Mammary epithelial cell (primary cell): ENCODE measurements at regions of chr20 and their contacts with region 1.

Region 1: DNA sequence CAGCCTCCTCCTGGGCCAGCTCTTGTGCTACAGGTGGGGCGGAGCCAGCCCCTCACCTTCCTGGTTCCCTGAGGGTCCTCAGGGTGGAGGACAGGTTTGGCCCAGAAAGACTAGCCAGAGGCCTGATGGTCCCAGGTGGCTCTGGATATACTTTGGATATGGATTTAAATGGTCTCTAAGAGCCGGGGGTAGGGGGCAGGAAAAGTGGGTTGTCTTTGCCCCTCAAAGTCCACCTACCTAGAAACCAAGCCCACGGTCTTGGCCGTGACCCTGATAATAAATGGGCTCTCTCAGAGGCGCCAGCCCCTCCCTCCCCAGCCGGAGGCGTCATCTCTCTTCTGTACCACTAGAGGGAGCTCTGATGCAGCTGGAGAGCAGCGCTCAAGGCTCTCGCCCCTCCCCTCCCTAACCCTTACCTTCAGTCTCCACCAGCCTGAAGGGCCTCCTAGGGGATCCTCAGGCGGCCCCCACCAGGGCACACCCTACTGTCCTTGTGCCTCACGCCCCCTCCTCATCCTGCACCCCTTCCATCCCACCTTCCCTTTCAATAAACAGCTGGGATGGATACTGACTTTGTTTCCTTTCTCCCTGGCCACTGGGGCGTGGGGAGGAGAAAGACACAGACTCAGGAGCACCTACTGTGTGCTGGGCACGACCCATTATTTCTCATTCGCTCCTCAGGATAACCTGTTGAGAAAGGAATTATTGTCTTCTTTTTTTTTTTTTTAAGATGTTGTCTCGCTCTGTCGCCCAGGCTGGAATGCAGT is 7.6 kb downstream of the NRSN2 start:
- DNase-seq: peak; percentile 56
- H3K4me3 ChIP-seq: no peak overlapping the region
- H3K27ac ChIP-seq: no peak overlapping the region
- H3K4me1 ChIP-seq: no peaks in the 10 kb centered on the region
- H3K27me3 ChIP-seq: no peaks in the 10 kb centered on the region
- CTCF ChIP-seq: peak; percentile 91 to 95

Region 2: GRCh38 chr20:396619-397431 is 42.3 kb after region 1 on chr20:
- CTCF ChIA-PET with region 1: interaction called, 3 read pairs
- dilution Hi-C with region 1: no loop called
- in situ Hi-C with region 1: no loop called
- intact Hi-C with region 1: loop called (anchors 5 kb)
- DNase-seq: no peak
- H3K4me3 ChIP-seq: no peak overlapping the region
- H3K27ac ChIP-seq: no peak overlapping the region
- H3K4me1 ChIP-seq: peaks cover 18% of the 10 kb centered on the region
- H3K27me3 ChIP-seq: no peaks in the 10 kb centered on the region
- CTCF ChIP-seq: no peak

Region 3: DNA sequence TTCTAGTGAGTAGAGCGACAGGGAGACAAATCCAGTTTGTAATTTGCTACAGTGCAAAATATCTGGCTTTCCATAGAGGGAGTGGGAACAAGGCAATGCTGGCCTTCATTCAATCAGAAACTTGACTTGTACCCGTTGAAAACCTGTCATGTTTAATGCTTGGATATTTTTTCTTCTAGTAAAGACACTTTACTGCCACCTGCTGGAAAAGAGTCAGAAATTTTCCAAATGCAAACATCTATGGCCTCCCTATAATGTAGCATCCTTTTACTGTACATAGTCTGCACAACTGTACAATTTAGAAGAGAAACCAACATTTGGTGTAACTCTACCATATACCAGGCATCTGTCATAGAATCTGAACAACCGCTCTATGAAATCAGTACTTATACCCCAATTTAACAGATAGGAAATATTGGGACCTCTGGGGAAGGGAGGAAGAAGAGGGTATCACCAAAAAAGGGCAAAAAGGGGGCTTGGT is 124.5 kb after region 1 on chr20:
- CTCF ChIA-PET with region 1: no interaction called
- dilution Hi-C with region 1: no loop called
- in situ Hi-C with region 1: loop called (anchors 10 kb)
- intact Hi-C with region 1: loop called (anchors 1 kb)
- DNase-seq: peak; percentile 47
- H3K4me3 ChIP-seq: no peak overlapping the region
- H3K27ac ChIP-seq: no peak overlapping the region
- H3K4me1 ChIP-seq: no peaks in the 10 kb centered on the region
- H3K27me3 ChIP-seq: no peaks in the 10 kb centered on the region
- CTCF ChIP-seq: peak; percentile 36 to 60

Region 4: DNA sequence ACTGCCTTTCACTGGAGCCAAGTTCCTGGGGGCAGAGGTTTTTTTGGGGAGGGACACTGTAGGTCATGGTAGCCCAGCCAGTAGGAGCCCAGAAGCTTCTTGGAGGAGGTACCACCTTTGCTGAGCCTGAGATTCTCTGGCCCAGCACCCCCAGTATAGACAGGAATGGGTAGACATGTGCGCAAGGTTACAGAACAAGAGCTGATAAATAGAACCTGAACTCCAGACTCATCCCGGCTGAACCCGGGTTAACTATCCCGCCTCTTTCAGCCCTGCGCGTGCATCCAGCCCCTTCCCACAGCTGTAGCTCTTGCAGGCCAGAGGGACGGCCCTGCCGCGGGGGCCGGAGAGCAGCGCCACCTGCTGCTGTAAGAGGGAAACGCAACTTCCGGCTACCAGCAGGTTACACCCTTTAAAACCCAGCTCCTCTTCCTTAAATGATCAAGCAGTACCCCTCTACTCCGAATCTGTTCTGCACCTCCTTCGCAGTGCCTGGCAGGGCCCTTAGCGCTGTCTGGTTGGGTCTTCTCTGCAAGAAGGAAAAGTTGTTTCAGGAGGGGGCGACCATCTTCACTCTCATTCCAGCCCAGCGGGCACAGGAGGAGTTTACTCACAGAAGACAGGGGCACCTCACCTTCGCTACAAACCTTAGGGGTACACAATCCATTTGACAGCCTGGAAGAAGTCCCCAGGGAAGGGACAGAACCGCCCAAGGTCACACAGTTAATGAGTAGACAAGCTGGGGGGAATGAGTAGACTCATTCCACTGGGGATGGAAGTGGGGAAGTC is 291.0 kb after region 1 on chr20:
- CTCF ChIA-PET with region 1: no interaction called
- dilution Hi-C with region 1: no loop called
- in situ Hi-C with region 1: no loop called
- intact Hi-C with region 1: loop called (anchors 1 kb)
- DNase-seq: peak; percentile 35
- H3K4me3 ChIP-seq: no peak overlapping the region
- H3K27ac ChIP-seq: no peak overlapping the region
- H3K4me1 ChIP-seq: no peaks in the 10 kb centered on the region
- H3K27me3 ChIP-seq: peaks cover 4% of the 10 kb centered on the region
- CTCF ChIP-seq: peak; percentile 72 to 95

Region 5: GRCh38 chr20:728248-728944 is 373.9 kb after region 1 on chr20:
- CTCF ChIA-PET with region 1: no interaction called
- dilution Hi-C with region 1: no loop called
- in situ Hi-C with region 1: no loop called
- intact Hi-C with region 1: loop called (anchors 2 kb)
- DNase-seq: no peak
- H3K4me3 ChIP-seq: peak overlapping the region; percentile 42 to 52 (median 49)
- H3K27ac ChIP-seq: no peak overlapping the region
- H3K4me1 ChIP-seq: peaks cover 9% of the 10 kb centered on the region
- H3K27me3 ChIP-seq: peaks cover 12% of the 10 kb centered on the region
- CTCF ChIP-seq: peak; percentile 28 to 78